Right lobe of liver (tissue), 6 donors: ENCODE measurements at regions of chr1 and their contacts with region 1.

Region 1: GRCh38 chr1:151156515-151156819 is at the start of gene TNFAIP8L2:
- DNase-seq: peak in 2 of 3 donors; percentile 71 to 75
- ATAC-seq: peak; percentile 68 to 75 (median 70)
- H3K4me3 ChIP-seq: peak within 1 kb of the TSS; percentile 9 to 35 (median 25)
- H3K27ac ChIP-seq: peak within 1 kb of the TSS in 2 of 3 donors; percentile 43 to 45
- H3K4me1 ChIP-seq: no peaks in the 10 kb centered on the region
- H3K27me3 ChIP-seq: no peaks in the 10 kb centered on the region
- CTCF ChIP-seq: no peak
- POLR2A ChIP-seq: no peak
- total RNA-seq, gene TNFAIP8L2: 1.1 to 4.2 (median 2.2) TPM

Region 2: DNA sequence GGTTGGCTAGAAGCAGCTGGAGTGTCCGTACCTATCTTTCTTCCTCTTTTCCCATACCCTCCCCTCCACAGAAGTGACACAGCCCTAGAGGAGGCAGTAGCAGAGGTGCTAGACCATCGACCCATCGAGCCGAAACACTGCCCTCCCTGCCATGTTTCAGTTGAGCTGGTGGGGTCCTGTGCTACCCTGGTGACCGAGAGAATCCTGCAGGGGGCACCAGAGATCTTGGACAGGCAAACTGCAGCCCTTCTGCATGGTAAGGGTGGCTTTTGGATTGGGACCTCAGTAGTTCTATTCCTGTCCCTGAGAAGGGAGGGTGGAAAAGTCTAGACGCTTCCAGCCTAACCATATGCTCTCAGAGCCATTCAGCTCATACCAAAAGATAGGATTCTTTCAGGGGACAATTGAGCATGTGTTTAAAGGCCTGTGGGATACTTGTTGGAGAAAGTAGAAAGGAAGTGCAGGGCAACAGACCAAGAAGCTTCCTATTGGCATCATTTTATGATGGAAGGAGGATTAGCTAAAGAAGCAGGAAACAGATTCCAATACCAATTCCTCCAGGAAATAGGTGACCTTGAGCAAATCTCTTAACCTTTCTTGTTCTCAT is 131.8 kb before region 1 on chr1:
- intact Hi-C with region 1: loop called in 1 of 2 experiments (anchors 10 kb)
- DNase-seq: peak; percentile 72 to 80 (median 75)
- ATAC-seq: peak; percentile 93 to 98 (median 96)
- H3K4me3 ChIP-seq: no peak overlapping the region
- H3K27ac ChIP-seq: no peak overlapping the region
- H3K4me1 ChIP-seq: no peaks in the 10 kb centered on the region
- H3K27me3 ChIP-seq: no peaks in the 10 kb centered on the region
- CTCF ChIP-seq: peak; percentile 61 to 71 (median 71)
- POLR2A ChIP-seq: no peak

Region 3: GRCh38 chr1:151098126-151098525 is 58.3 kb before region 1 on chr1:
- intact Hi-C with region 1: loop called in 1 of 2 experiments (anchors 5 kb)
- DNase-seq: no peak
- ATAC-seq: no peak
- H3K4me3 ChIP-seq: no peak overlapping the region
- H3K27ac ChIP-seq: no peak overlapping the region
- H3K4me1 ChIP-seq: no peaks in the 10 kb centered on the region
- H3K27me3 ChIP-seq: no peaks in the 10 kb centered on the region
- CTCF ChIP-seq: no peak
- POLR2A ChIP-seq: no peak